B cell (primary cell): ENCODE measurements at regions of chr5 and their contacts with region 1.

Region 1: GRCh38 chr5:41856644-41857491 is 13.4 kb downstream of the OXCT1 start:
- DNase-seq: peak; percentile 81
- ATAC-seq: peak; percentile 81
- H3K4me3 ChIP-seq: no peak overlapping the region
- H3K4me3 Mint-ChIP-seq: no peak overlapping the region
- H3K27ac ChIP-seq: no peak overlapping the region
- H3K27ac Mint-ChIP-seq: no peak overlapping the region
- H3K4me1 ChIP-seq: no peaks in the 10 kb centered on the region
- H3K4me1 Mint-ChIP-seq: no peaks in the 10 kb centered on the region
- H3K27me3 ChIP-seq: no peaks in the 10 kb centered on the region
- H3K27me3 Mint-ChIP-seq: no peaks in the 10 kb centered on the region
- CTCF ChIP-seq: peak; percentile 91

Region 2: GRCh38 chr5:41843456-41844370 is 13.2 kb before region 1 on chr5:
- CTCF ChIA-PET with region 1: interaction called, 76 read pairs
- POLR2A ChIA-PET with region 1: no interaction called
- intact Hi-C with region 1: no loop called
- DNase-seq: peak; percentile 35
- ATAC-seq: no peak
- H3K4me3 ChIP-seq: no peak overlapping the region
- H3K4me3 Mint-ChIP-seq: no peak overlapping the region
- H3K27ac ChIP-seq: no peak overlapping the region
- H3K27ac Mint-ChIP-seq: no peak overlapping the region
- H3K4me1 ChIP-seq: peaks cover 0 to 9% of the 10 kb centered on the region in 2 donors
- H3K4me1 Mint-ChIP-seq: no peaks in the 10 kb centered on the region
- H3K27me3 ChIP-seq: no peaks in the 10 kb centered on the region
- H3K27me3 Mint-ChIP-seq: no peaks in the 10 kb centered on the region
- CTCF ChIP-seq: peak; percentile 75

Region 3: DNA sequence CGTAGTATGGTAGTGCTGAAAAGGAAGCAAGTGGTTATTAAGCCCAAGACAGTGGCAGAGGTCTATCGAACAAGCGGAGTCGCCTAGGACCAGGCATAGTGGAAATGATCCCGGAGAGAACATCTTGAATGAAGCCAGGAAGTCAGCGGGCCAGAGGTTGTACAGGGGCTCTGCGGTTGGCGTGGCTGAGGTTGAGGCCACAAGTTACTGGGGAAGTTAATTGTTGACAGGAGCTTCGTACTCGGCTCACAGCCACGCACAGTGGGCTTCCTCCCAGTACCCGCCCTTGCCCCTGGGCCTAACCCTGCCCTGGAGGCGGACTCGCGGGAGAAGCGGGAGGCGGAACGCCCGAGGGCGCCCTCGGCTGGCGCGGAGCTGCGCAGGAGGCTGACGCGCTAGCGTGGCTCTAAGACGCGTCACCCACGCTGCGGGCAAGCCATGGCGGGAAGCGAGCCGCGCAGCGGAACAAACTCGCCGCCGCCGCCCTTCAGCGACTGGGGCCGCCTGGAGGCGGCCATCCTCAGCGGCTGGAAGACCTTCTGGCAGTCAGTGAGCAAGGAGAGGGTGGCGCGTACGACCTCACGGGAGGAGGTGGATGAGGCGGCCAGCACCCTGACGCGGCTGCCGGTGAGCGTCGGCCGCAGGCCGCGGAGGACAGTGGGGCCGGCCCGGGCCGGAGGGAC is 68.1 kb after region 1 on chr5 and contains the start of gene FBXO4:
- CTCF ChIA-PET with region 1: interaction called, 10 read pairs
- POLR2A ChIA-PET with region 1: no interaction called
- intact Hi-C with region 1: loop called (anchors 2 kb)
- DNase-seq: peak; percentile 95
- ATAC-seq: peak; percentile 93
- H3K4me3 ChIP-seq: peak within 1 kb of the TSS; percentile 72 to 87 (median 77)
- H3K4me3 Mint-ChIP-seq: peak within 1 kb of the TSS; percentile 86
- H3K27ac ChIP-seq: peak within 1 kb of the TSS; percentile 96 to 98
- H3K27ac Mint-ChIP-seq: peak within 1 kb of the TSS; percentile 95
- H3K4me1 ChIP-seq: peaks cover 13 to 17% of the 10 kb centered on the region in 2 donors
- H3K4me1 Mint-ChIP-seq: peaks cover 27% of the 10 kb centered on the region
- H3K27me3 ChIP-seq: no peaks in the 10 kb centered on the region
- H3K27me3 Mint-ChIP-seq: no peaks in the 10 kb centered on the region
- CTCF ChIP-seq: peak; percentile 67
- total RNA-seq, gene FBXO4: 17.1 and 17.9 TPM in 2 replicates

Region 4: GRCh38 chr5:42005561-42006153 is 148.8 kb after region 1 on chr5:
- CTCF ChIA-PET with region 1: interaction called, 6 read pairs
- POLR2A ChIA-PET with region 1: no interaction called
- intact Hi-C with region 1: loop called (anchors 2 kb)
- DNase-seq: peak; percentile 22
- ATAC-seq: no peak
- H3K4me3 ChIP-seq: no peak overlapping the region
- H3K4me3 Mint-ChIP-seq: no peak overlapping the region
- H3K27ac ChIP-seq: no peak overlapping the region
- H3K27ac Mint-ChIP-seq: no peak overlapping the region
- H3K4me1 ChIP-seq: no peaks in the 10 kb centered on the region
- H3K4me1 Mint-ChIP-seq: no peaks in the 10 kb centered on the region
- H3K27me3 ChIP-seq: no peaks in the 10 kb centered on the region
- H3K27me3 Mint-ChIP-seq: peaks cover 3% of the 10 kb centered on the region
- CTCF ChIP-seq: peak; percentile 90

Region 5: DNA sequence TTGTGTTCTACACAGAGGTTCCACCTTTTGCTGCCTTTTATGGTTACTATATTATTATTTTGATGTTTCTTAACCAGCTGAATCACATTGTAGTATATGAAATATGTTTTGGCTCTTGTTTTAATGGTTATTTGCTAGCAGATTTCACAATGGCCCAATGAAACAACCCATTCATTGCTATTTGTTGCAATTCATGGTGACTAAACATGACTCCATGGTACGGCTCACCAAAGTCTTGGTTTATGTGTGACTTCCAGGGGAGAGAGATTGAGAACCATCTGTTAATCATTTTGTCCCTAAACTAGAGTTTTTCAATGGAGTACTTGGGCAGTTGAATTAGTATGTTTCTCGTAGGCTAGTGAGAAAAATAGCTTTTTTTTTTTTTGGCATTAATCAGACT is 674.7 kb after region 1 on chr5:
- CTCF ChIA-PET with region 1: no interaction called
- POLR2A ChIA-PET with region 1: no interaction called
- intact Hi-C with region 1: no loop called
- DNase-seq: no peak
- ATAC-seq: no peak
- H3K4me3 ChIP-seq: no peak overlapping the region
- H3K4me3 Mint-ChIP-seq: no peak overlapping the region
- H3K27ac ChIP-seq: no peak overlapping the region
- H3K27ac Mint-ChIP-seq: no peak overlapping the region
- H3K4me1 ChIP-seq: no peaks in the 10 kb centered on the region
- H3K4me1 Mint-ChIP-seq: no peaks in the 10 kb centered on the region
- H3K27me3 ChIP-seq: no peaks in the 10 kb centered on the region
- H3K27me3 Mint-ChIP-seq: no peaks in the 10 kb centered on the region
- CTCF ChIP-seq: no peak

Region 6: DNA sequence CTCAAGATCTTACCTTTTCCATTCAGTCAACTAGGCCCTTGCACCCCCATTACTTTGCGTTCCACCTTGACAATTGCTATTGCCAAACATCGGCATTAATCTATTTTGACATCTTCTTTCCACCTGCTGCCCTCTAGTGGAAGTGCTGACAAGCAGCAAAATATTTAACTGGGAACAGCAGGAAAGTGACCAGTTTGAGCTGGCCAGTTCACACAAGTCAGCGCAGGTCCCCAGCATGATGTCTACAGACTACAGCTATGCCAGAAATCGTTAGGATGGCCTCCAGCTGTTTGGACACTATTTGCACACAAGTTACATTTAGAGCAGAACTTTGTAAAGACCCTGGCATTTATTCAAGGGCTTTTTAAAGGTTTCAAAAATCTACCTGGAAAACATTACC is 726.5 kb after region 1 on chr5:
- CTCF ChIA-PET with region 1: interaction called, 21 read pairs
- POLR2A ChIA-PET with region 1: no interaction called
- intact Hi-C with region 1: loop called (anchors 1 kb)
- DNase-seq: peak; percentile 60
- ATAC-seq: peak; percentile 54
- H3K4me3 ChIP-seq: no peak overlapping the region
- H3K4me3 Mint-ChIP-seq: no peak overlapping the region
- H3K27ac ChIP-seq: no peak overlapping the region
- H3K27ac Mint-ChIP-seq: no peak overlapping the region
- H3K4me1 ChIP-seq: peaks cover 0 to 5% of the 10 kb centered on the region in 2 donors
- H3K4me1 Mint-ChIP-seq: peaks cover 4% of the 10 kb centered on the region
- H3K27me3 ChIP-seq: peaks cover 0 to 4% (median 0%) of the 10 kb centered on the region in 4 experiments
- H3K27me3 Mint-ChIP-seq: peaks cover 15% of the 10 kb centered on the region
- CTCF ChIP-seq: peak; percentile 86

Region 7: GRCh38 chr5:42767491-42768105 is 910.7 kb after region 1 on chr5:
- CTCF ChIA-PET with region 1: interaction called, 13 read pairs
- POLR2A ChIA-PET with region 1: no interaction called
- intact Hi-C with region 1: loop called (anchors 2 kb)
- DNase-seq: peak; percentile 41
- ATAC-seq: no peak
- H3K4me3 ChIP-seq: no peak overlapping the region
- H3K4me3 Mint-ChIP-seq: no peak overlapping the region
- H3K27ac ChIP-seq: no peak overlapping the region
- H3K27ac Mint-ChIP-seq: no peak overlapping the region
- H3K4me1 ChIP-seq: no peaks in the 10 kb centered on the region
- H3K4me1 Mint-ChIP-seq: no peaks in the 10 kb centered on the region
- H3K27me3 ChIP-seq: no peaks in the 10 kb centered on the region
- H3K27me3 Mint-ChIP-seq: peaks cover 15% of the 10 kb centered on the region
- CTCF ChIP-seq: peak; percentile 69